ENCODE measurements at regions of chr1 and their contacts with region 1.

Region 1: GRCh38 chr1:226457307-226457712 is 49.4 kb upstream of the PARP1 start:
- DNase-seq: peak; percentile 76
- H3K4me3 Mint-ChIP-seq: peak overlapping the region; percentile 48
- H3K27ac Mint-ChIP-seq: no peak overlapping the region
- H3K4me1 Mint-ChIP-seq: peaks cover 13% of the 10 kb centered on the region
- H3K27me3 Mint-ChIP-seq: no peaks in the 10 kb centered on the region

Region 2: DNA sequence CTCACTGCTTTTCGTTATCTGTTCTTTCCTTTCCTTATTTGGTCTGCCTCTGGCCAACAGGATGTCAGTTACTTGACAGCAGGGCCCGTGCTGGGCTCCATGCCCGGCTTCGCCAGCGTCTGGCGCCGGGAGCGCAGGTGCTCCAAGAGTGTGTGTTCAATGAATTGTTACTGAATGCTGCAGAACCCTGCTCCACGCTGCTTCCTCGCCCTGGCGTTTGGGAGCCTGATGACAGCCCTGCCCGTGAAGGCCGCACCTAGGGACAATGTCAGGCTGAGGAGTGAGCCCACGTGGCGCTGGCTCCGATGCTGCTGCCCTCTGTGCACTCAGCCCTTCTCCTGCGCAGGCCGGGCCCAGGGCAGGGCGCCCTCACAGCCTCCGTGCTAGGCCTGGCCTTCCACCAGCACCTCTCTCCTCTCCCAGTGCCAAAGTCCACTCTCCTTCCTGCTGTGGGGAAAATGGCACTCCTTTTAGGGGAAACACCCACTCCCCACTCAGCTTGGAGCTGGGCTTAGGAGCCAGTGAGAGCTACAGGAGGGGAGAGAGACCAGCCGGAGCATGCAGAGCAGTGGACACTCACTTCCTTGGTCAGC is 322.2 kb before region 1 on chr1:
- CTCF ChIA-PET with region 1: no interaction called
- POLR2A ChIA-PET with region 1: no interaction called
- intact Hi-C with region 1: no loop called
- DNase-seq: no peak
- H3K4me3 Mint-ChIP-seq: no peak overlapping the region
- H3K27ac Mint-ChIP-seq: no peak overlapping the region
- H3K4me1 Mint-ChIP-seq: no peaks in the 10 kb centered on the region
- H3K27me3 Mint-ChIP-seq: no peaks in the 10 kb centered on the region

Region 3: GRCh38 chr1:226444901-226445300 is 12.4 kb before region 1 on chr1:
- CTCF ChIA-PET with region 1: interaction called, 12 read pairs
- POLR2A ChIA-PET with region 1: no interaction called
- intact Hi-C with region 1: no loop called
- DNase-seq: peak; percentile 81
- H3K4me3 Mint-ChIP-seq: no peak overlapping the region
- H3K27ac Mint-ChIP-seq: peak overlapping the region; percentile 6
- H3K4me1 Mint-ChIP-seq: peaks cover 32% of the 10 kb centered on the region
- H3K27me3 Mint-ChIP-seq: no peaks in the 10 kb centered on the region

Region 4: GRCh38 chr1:226608699-226609505 is 151.6 kb after region 1 on chr1:
- CTCF ChIA-PET with region 1: interaction called, 10 read pairs
- POLR2A ChIA-PET with region 1: no interaction called
- intact Hi-C with region 1: no loop called
- DNase-seq: peak; percentile 78
- H3K4me3 Mint-ChIP-seq: no peak overlapping the region
- H3K27ac Mint-ChIP-seq: no peak overlapping the region
- H3K4me1 Mint-ChIP-seq: no peaks in the 10 kb centered on the region
- H3K27me3 Mint-ChIP-seq: no peaks in the 10 kb centered on the region

Measured in activated CD4-positive, alpha-beta memory T cell treated with anti-CD3 and anti-CD28 coated beads for 36 hours (primary cell).